ENCODE measurements at regions of chr9 and their contacts with region 1.

Region 1: GRCh38 chr9:128947422-128948301 is at the starts of genes DOLK and NUP188:
- DNase-seq: peak; percentile 99
- H3K4me3 Mint-ChIP-seq: peak within 1 kb of the TSS; percentile 98
- H3K27ac Mint-ChIP-seq: peak within 1 kb of the TSS; percentile 99
- H3K4me1 Mint-ChIP-seq: peaks cover 37% of the 10 kb centered on the region
- H3K27me3 Mint-ChIP-seq: no peaks in the 10 kb centered on the region
- total RNA-seq, gene DOLK: 17.7 and 18.1 TPM in 2 replicates
- total RNA-seq, gene NUP188: 154 and 158 TPM in 2 replicates

Region 2: GRCh38 chr9:128455849-128456612 is 491.6 kb before region 1 on chr9 and contains the start of gene ODF2:
- intact Hi-C with region 1: loop called (anchors 1 kb)
- DNase-seq: peak; percentile 98
- H3K4me3 Mint-ChIP-seq: peak within 1 kb of the TSS; percentile 93
- H3K27ac Mint-ChIP-seq: peak within 1 kb of the TSS; percentile 98
- H3K4me1 Mint-ChIP-seq: peaks cover 13% of the 10 kb centered on the region
- H3K27me3 Mint-ChIP-seq: peaks cover 3% of the 10 kb centered on the region
- total RNA-seq, gene ODF2: 55.6 and 57.6 TPM in 2 replicates

Region 3: DNA sequence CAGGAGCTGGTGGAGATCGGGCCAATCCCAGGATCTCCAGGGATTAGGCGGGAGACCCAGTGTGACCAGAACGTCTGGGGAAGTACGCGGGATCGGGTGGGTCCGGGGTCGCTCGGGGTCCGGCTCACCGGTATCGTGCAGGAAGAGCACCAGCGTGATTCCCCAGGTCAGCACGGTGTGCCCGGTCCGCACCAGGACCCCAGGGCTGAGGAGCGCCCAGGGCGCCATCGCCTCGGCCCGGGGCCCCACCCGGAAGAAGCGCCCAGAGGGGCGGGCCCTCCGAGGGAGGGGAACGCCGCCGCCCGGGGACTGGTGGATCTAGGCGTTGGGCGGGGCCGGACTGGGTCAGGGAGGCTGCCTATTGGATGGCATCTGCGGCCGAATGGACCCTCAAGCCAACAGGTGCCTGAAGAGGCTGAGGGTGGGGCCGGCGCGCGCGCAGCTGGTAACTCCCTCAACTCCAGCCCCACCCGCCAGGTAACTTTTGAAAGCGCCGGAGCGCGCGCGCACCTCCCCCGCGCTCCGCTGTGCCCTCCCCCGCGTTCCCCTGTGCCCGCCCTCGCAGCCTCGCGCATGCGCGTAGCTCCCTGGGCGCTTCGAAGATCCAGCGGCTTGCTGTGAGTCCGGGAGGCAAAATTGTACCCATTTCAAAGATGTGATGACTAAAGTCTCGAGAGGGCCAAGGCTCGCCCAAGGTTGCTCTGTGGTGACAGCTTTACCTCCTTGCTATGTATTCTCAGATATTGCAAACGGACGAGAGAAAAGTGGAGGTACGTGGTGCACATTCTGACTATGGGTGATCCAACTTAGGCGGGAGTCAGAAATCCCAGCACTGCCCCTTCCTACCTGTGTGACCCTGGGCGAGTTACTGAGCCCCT is 223.6 kb before region 1 on chr9 and contains the start of gene ZDHHC12:
- intact Hi-C with region 1: loop called (anchors 10 kb)
- DNase-seq: peak; percentile 99
- H3K4me3 Mint-ChIP-seq: peak within 1 kb of the TSS; percentile 92
- H3K27ac Mint-ChIP-seq: peak within 1 kb of the TSS; percentile 93
- H3K4me1 Mint-ChIP-seq: peaks cover 42% of the 10 kb centered on the region
- H3K27me3 Mint-ChIP-seq: no peaks in the 10 kb centered on the region
- total RNA-seq, gene ZDHHC12: 51.7 and 54.4 TPM in 2 replicates

Region 4: DNA sequence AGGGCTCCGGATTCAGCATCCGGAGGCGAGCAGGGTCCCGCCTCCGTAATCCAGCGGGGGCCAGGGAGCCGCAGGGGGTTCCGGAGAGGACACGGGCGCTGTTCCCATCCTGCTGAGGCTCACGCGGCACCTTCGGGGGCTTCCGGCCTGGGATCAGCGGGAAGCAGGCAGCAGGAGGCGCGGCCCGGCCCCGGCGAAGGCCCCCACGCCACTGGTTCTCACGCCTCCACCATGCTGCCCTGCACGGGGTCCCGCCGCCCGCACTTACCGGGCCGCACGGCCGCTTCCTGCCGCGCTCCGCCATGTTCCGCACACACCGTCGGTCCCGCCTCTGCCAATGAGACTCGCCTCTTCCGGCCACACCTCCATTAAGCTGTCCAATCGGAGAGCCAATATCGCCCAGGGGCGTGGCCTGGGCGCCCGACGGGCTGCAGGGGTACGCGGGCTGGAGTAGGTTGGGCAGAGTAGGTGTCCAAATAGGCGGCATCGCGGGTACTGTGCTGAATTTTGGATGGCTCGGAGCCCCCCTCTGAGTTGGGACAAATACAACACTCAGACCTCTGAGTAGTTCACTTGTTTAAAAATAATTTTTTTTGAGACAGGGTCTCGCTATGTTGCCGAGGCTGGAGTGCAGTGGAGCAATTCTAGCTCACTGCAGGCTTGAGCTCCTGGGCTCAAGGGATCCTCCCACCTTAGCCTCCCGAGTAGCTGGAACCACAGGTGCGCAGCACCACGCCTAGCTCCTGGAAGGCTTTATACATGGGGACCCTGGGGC is 118.0 kb before region 1 on chr9 and contains the start of gene SPOUT1:
- intact Hi-C with region 1: loop called (anchors 1 kb)
- DNase-seq: peak; percentile 95
- H3K4me3 Mint-ChIP-seq: peak within 1 kb of the TSS; percentile 97
- H3K27ac Mint-ChIP-seq: peak within 1 kb of the TSS; percentile 88
- H3K4me1 Mint-ChIP-seq: peaks cover 23% of the 10 kb centered on the region
- H3K27me3 Mint-ChIP-seq: no peaks in the 10 kb centered on the region
- total RNA-seq, gene SPOUT1: 151 and 158 TPM in 2 replicates

Region 5: GRCh38 chr9:129028192-129028957 is 80.7 kb after region 1 on chr9 and contains the start of gene SH3GLB2:
- intact Hi-C with region 1: loop called (anchors 1 kb)
- DNase-seq: peak; percentile 85
- H3K4me3 Mint-ChIP-seq: peak within 1 kb of the TSS; percentile 91
- H3K27ac Mint-ChIP-seq: peak within 1 kb of the TSS; percentile 80
- H3K4me1 Mint-ChIP-seq: peaks cover 24% of the 10 kb centered on the region
- H3K27me3 Mint-ChIP-seq: no peaks in the 10 kb centered on the region
- total RNA-seq, gene SH3GLB2: 71.1 and 74.8 TPM in 2 replicates

Region 6: GRCh38 chr9:129110740-129111527 is 163.3 kb after region 1 on chr9 and contains the starts of genes CRAT and PTPA:
- intact Hi-C with region 1: loop called (anchors 1 kb)
- DNase-seq: peak; percentile 89
- H3K4me3 Mint-ChIP-seq: peak within 1 kb of the TSS; percentile 96
- H3K27ac Mint-ChIP-seq: peak within 1 kb of the TSS; percentile 94
- H3K4me1 Mint-ChIP-seq: peaks cover 36% of the 10 kb centered on the region
- H3K27me3 Mint-ChIP-seq: no peaks in the 10 kb centered on the region
- total RNA-seq, gene CRAT: 9.9 and 10.0 TPM in 2 replicates
- total RNA-seq, gene PTPA: 105 and 114 TPM in 2 replicates

Measured in activated T-helper 1 cell treated with anti-CD3 and anti-CD28 coated beads, Interleukin-12 subunit alpha, Interleukin-12 subunit beta, Interleukin-2, Interleukin-4 antibody, amounts not matched to agents 30 ng/mL and 10 ng/mL and 1 ng/mL, durations not matched to agents 14 hours and 24 hours and 36 hours (primary cell).